Activated naive CD4-positive, alpha-beta T cell treated with anti-CD3 and anti-CD28 coated beads, Interleukin-2, amount 10 ng/mL, durations not matched to agents 7 days and 5 days (primary cell): ENCODE measurements at regions of chr20 and their contacts with region 1.

Region 1: DNA sequence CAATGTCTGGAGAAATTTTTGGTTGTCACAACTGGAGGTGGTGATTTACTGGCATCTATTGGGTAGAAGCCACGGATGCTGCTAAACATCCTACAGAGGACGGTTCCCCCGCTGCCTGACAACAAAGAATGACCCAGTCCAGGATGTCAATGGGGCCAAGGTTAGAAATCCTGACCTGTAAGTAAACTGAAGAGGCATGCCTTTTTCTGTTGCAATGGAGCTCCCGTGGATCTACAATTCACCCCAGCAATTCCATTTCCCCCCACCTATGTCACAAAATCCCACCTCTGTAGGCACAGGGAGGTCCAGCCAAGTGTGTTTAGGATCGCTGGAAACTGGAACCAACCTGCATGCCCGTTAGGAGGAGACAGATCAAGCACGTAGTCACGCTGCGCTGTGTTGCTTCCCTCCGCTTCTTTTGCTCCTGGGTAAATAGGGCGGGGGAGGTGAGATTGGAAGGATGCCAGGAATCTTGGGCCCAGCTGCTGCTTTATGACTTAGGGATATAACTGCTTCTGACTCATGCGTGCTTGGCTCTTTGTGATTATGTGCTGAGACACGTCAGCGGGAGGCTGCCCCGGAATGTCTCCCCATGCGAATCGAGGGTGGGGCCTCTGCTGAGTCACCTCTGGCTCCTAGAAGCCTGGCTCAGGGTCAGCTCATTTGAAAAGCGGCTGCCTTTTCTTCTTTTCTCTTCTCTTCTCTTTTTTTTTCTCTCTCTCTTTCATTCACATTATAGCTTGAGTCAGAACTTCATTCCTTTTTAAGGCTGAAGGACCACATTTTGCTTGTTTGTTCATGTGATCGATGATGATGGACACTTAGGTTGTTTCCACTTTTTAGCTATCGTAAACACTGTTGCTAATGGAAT is 12.4 kb upstream of the PEDS1 start:
- DNase-seq: peak; percentile 80
- H3K4me3 Mint-ChIP-seq: peak overlapping the region; percentile 55
- H3K27ac Mint-ChIP-seq: peak overlapping the region; percentile 74
- H3K4me1 Mint-ChIP-seq: peaks cover 14% of the 10 kb centered on the region
- H3K27me3 Mint-ChIP-seq: peaks cover 5% of the 10 kb centered on the region

Region 2: DNA sequence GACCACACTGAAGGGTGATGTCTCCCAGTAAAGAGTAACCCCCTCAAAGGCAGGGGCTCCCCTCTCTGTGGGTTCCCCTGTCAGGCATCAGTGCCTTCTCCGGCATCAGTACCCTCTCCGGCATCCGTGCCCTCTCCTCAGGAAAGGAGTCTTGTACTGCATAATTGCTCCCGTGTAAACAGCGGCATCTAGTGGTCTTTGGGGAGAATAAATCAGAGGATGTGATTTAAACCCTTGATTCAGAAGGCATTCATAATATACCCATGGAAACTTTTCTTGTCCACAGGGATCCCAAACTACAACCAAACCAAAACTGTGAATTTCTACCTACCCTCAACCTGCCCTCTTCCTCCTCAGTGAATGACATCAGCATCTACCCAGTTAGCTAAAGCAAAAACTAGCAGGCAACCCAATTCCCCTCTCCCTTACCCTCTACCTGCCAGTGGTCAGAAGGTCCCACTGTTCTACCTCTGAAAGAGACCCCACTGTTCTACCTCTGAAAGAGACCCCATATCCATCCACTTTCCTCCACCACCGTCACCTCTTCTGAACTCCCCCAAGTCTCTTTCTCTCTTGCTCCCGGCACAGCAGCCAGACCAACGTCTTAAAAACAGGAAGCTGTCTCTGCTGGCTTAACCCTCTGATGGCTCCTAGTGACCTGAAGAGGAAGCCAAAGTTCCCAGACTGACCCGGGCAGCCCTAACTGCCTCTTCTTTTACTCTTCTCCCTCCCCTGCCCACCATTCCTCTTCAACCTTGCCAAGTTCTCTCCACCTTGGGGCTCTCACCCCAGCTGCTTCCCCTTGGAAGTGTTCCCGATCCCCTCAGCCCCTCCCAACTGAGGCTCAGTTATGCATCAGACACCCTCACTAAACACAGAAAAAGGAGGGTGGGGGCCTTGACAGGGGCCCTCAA is 80.2 kb before region 1 on chr20:
- CTCF ChIA-PET with region 1: interaction called, 22 read pairs
- DNase-seq: peak; percentile 55
- H3K4me3 Mint-ChIP-seq: peak overlapping the region; percentile 53
- H3K27ac Mint-ChIP-seq: peak overlapping the region; percentile 39
- H3K4me1 Mint-ChIP-seq: peaks cover 16% of the 10 kb centered on the region
- H3K27me3 Mint-ChIP-seq: no peaks in the 10 kb centered on the region

Region 3: DNA sequence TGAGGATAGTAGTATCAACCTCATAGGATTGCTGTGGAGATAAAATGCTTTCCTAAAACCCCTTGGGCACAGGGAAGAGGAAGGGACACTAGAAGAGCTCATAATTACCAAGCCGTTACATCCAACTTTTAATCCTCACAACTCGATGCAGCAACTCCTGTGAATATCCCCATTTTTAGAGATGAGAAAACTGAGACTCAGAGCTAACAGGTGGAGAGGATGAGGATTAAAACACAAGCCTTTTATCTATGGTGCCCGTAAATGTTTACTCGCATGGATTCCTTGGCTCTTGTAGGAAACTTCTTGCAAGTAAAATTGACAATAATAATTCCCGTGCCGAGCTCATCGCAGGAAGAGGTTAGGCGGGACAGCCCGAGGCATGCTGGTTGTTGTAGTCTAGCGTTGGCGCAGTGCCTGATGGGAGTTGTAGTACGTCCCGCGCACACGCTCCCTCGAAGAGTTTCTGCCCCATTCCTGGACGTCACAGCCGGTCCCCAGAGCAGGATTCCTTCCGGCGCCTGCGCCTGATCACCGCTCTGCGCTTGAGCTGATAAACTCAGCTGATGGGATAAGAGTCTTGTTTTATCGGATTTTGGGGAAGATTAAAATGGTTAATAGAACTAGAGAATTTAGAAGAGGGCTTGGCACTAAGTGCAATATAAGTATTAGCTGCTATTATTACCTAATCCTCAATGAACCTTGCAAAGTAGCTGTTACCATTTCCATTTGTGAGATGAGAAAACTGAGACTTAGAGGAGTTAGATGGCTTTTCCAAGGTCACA is 50.1 kb before region 1 on chr20:
- CTCF ChIA-PET with region 1: interaction called, 143 read pairs
- DNase-seq: peak; percentile 95
- H3K4me3 Mint-ChIP-seq: peak overlapping the region; percentile 83
- H3K27ac Mint-ChIP-seq: peak overlapping the region; percentile 87
- H3K4me1 Mint-ChIP-seq: peaks cover 53% of the 10 kb centered on the region
- H3K27me3 Mint-ChIP-seq: no peaks in the 10 kb centered on the region

Region 4: GRCh38 chr20:50120897-50121693 is 44.8 kb before region 1 on chr20:
- CTCF ChIA-PET with region 1: interaction called, 143 read pairs
- DNase-seq: peak; percentile 77
- H3K4me3 Mint-ChIP-seq: no peak overlapping the region
- H3K27ac Mint-ChIP-seq: peak overlapping the region; percentile 49
- H3K4me1 Mint-ChIP-seq: peaks cover 10% of the 10 kb centered on the region
- H3K27me3 Mint-ChIP-seq: no peaks in the 10 kb centered on the region

Region 5: DNA sequence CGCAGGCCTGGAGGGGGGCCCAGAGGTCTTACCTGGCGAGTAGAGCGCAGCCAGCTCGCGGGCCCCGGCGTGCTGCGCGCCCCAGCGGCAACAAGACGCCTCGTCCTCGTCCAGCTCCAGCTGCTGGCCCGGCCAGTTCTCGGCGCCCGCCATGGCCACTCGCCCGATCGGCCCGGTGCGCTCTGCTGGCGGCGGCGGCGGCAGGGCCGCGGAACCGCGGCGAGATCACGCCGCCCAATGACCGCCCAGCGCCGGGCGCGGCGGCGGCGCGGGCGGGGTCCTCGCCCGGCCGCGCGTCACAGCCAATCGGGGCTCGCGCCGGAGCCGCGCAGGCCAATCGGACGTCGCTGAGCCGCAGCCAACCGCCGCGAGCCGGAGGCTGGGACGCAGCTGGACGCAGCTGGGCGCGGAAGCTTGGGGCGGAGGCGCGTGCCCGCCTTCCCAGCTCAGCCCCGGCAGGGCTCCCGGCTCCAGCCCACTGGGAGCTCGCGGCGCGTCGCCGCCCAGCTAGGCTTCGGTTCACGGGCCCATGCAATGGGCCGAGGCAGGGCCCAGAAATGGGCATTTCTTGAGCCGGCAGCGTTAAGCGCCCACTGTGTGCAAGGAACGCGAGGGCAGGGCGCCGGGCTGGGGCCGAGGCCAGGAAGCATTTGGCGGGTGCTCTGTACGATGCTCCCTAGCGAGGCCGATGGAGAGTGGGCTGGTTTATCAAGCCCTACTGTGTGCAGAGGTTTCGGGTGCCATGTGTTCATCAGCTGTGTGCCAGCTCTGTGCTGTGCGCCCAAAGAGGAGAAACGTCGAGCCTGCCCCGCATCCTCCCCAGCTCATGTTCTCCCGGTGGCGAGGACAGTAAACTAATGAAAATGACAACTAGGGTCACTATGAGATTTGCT is 12.2 kb before region 1 on chr20 and contains the start of gene PEDS1:
- CTCF ChIA-PET with region 1: interaction called, 31 read pairs
- DNase-seq: peak; percentile 91
- H3K4me3 Mint-ChIP-seq: peak within 1 kb of the TSS; percentile 86
- H3K27ac Mint-ChIP-seq: peak within 1 kb of the TSS; percentile 90
- H3K4me1 Mint-ChIP-seq: peaks cover 44% of the 10 kb centered on the region
- H3K27me3 Mint-ChIP-seq: peaks cover 10% of the 10 kb centered on the region

Region 6: GRCh38 chr20:50179507-50180016 is 13.6 kb after region 1 on chr20:
- CTCF ChIA-PET with region 1: interaction called, 11 read pairs
- DNase-seq: no peak
- H3K4me3 Mint-ChIP-seq: no peak overlapping the region
- H3K27ac Mint-ChIP-seq: no peak overlapping the region
- H3K4me1 Mint-ChIP-seq: no peaks in the 10 kb centered on the region
- H3K27me3 Mint-ChIP-seq: peaks cover 17% of the 10 kb centered on the region